Gastrocnemius medialis (tissue), 4 donors: ENCODE measurements at regions of chr2 and their contacts with region 1.

Region 1: GRCh38 chr2:127408004-127408806 is 10.0 kb upstream of the PROC start:
- DNase-seq: peak; percentile 80 to 90
- ATAC-seq: peak; percentile 63 to 70
- H3K4me3 ChIP-seq: peak overlapping the region; percentile 47 to 59 (median 54)
- H3K27ac ChIP-seq: peak overlapping the region; percentile 86 to 95 (median 89)
- H3K4me1 ChIP-seq: peaks cover 16 to 25% of the 10 kb centered on the region in 2 donors
- H3K27me3 ChIP-seq: no peaks in the 10 kb centered on the region
- CTCF ChIP-seq: peak in 1 of 5 experiments; percentile 6
- POLR2A ChIP-seq: peak; percentile 85 to 92

Region 2: GRCh38 chr2:127086990-127087790 is 321.0 kb before region 1 on chr2:
- in situ Hi-C with region 1: loop called in 1 of 4 experiments (anchors 25 kb)
- intact Hi-C with region 1: no loop called
- DNase-seq: peak in 1 of 2 donors; percentile 87
- ATAC-seq: peak; percentile 18 to 21
- H3K4me3 ChIP-seq: peak overlapping the region; percentile 24 to 42 (median 28)
- H3K27ac ChIP-seq: peak overlapping the region; percentile 97 to 100 (median 100)
- H3K4me1 ChIP-seq: peaks cover 94 to 97% of the 10 kb centered on the region in 2 donors
- H3K27me3 ChIP-seq: no peaks in the 10 kb centered on the region
- CTCF ChIP-seq: no peak
- POLR2A ChIP-seq: peak in 1 of 2 donors; percentile 61

Region 3: GRCh38 chr2:127153691-127154158 is 254.5 kb before region 1 on chr2:
- in situ Hi-C with region 1: no loop called
- intact Hi-C with region 1: loop called (anchors 5 kb)
- DNase-seq: peak; percentile 79 to 90
- ATAC-seq: peak; percentile 82 to 84
- H3K4me3 ChIP-seq: no peak overlapping the region
- H3K27ac ChIP-seq: peak overlapping the region; percentile 89 to 99 (median 93)
- H3K4me1 ChIP-seq: peaks cover 27 to 52% of the 10 kb centered on the region in 2 donors
- H3K27me3 ChIP-seq: no peaks in the 10 kb centered on the region
- CTCF ChIP-seq: no peak
- POLR2A ChIP-seq: peak; percentile 30 to 32

Region 4: DNA sequence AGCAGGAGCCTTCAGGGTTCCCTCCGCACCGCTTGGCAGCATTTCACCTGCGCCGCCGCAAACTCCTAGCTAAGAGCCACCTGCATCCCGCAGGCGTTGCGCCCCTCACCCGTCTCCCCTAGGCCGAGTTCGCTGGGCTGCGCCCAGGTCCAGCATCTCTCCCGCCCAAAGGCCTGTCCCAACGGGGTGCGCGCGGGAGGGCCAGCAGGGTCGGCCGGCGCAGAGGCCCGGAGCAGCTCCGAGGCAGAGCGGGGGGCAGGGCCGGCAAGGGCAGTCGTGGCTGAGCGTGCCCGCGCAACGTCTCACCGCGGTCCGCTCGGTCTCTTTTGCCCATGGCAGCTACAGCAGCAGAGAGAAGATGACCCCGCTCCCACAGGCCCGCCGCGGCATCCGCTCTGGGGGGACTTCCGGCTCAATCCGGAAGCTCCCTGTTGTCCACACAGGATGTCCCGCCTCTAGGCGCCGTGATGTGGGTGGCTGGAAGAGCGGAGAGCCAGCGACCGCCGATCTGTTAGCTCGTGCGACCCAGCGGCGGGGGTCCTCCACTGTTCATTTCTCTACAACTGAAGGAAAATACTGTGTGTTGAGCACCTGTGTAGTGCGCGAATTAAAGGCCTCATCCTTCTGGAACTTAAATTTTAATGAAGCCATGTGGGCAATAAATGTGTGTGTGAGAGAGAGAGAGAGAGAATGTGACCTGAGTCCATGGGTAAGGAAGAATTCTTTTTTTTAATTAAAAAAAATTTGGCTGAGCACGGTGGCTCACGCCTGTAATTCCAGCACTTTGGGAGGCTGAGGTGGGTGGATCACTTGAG is 114.2 kb before region 1 on chr2 and contains the start of gene ERCC3:
- in situ Hi-C with region 1: no loop called
- intact Hi-C with region 1: no loop called
- DNase-seq: peak; percentile 61 to 74
- ATAC-seq: peak; percentile 95
- H3K4me3 ChIP-seq: peak within 1 kb of the TSS; percentile 77 to 99 (median 86)
- H3K27ac ChIP-seq: peak within 1 kb of the TSS; percentile 78 to 85 (median 84)
- H3K4me1 ChIP-seq: peaks cover 12 to 13% of the 10 kb centered on the region in 2 donors
- H3K27me3 ChIP-seq: no peaks in the 10 kb centered on the region
- CTCF ChIP-seq: peak in 1 of 5 experiments; percentile 17
- POLR2A ChIP-seq: peak; percentile 30 to 40
- total RNA-seq, gene ERCC3: 24.9 to 28.2 (median 26.7) TPM

Region 5: DNA sequence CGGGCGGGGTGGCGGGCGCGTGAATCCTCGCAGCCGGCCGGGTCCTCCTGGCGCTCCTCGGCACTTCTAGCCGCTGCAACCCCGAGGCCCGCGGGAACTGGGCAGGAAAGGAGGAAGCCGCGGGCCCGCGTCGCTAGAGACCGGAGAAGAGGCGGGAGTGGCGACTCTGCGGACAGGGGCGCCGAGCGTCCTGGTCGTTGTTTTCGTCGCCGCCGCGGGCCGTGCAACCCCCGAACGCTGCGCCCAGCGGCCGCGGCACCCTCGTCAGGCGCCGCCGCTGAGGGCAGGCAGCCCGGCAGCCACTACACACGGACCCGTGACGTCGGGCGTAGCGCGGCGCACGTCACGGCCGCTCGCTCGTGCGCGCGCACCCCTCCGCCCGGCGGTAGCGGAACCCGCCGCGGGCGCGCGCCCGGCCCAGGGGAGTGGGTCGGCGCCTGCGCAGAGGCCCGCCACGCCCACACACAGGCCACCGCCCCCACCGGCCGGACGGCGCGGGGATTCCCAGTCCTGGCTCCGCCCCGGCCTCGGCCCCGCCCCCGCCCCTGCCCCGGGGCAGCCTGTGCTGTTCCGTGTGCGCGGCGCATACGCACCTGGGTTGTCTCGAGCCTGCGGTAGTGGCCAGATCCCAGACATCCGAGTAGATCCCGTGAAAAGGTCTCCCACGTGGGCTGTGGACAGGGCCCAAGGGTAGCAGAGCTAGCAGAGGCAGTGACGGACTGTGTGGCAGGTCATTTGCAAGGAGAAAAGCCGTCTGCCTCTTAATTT is 20.4 kb before region 1 on chr2 and contains the start of gene MAP3K2:
- in situ Hi-C with region 1: no loop called
- intact Hi-C with region 1: loop called (anchors 1 kb)
- DNase-seq: peak; percentile 94 to 98
- ATAC-seq: peak; percentile 82 to 84
- H3K4me3 ChIP-seq: peak within 1 kb of the TSS; percentile 77 to 97 (median 94)
- H3K27ac ChIP-seq: peak within 1 kb of the TSS; percentile 99 to 100 (median 100)
- H3K4me1 ChIP-seq: peaks cover 35 to 40% of the 10 kb centered on the region in 2 donors
- H3K27me3 ChIP-seq: no peaks in the 10 kb centered on the region
- CTCF ChIP-seq: peak in 1 of 5 experiments; percentile 11
- POLR2A ChIP-seq: peak; percentile 97 to 99
- total RNA-seq, gene MAP3K2: 33.8 to 46.4 (median 39.4) TPM

Region 6: DNA sequence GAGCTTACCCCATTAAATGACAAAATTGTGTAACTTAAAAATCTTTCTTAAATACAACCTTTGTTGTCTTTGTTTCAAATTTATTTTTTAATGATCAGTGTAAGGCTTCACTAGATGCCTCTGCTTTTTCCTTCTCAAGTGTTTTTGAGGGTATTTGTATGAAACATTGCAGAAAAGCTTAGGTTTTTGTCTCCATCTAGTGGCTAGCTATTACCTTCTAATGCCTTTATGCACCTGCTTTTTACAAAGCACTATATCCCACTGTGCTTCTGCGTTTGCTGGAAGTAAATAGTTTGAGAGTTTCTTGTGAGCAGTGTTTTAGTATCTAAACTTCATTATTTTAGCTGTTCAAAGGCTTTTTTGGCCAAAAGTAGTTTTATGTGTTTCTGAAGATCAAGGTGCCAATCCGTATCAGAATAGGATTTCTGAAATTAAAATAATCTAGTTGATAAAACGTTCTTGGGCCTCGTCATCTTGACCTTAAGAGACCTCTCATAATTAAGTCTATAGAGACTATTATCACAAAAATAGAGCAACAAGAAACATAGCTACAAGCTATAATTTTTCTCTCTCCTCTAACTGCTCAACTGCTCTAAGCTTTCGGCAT is 71.1 kb after region 1 on chr2:
- in situ Hi-C with region 1: no loop called
- intact Hi-C with region 1: no loop called
- DNase-seq: no peak
- ATAC-seq: peak in 1 of 2 donors; percentile 62
- H3K4me3 ChIP-seq: no peak overlapping the region
- H3K27ac ChIP-seq: no peak overlapping the region
- H3K4me1 ChIP-seq: no peaks in the 10 kb centered on the region
- H3K27me3 ChIP-seq: no peaks in the 10 kb centered on the region
- CTCF ChIP-seq: peak in 4 of 5 experiments; percentile 48 to 68 (median 60)
- POLR2A ChIP-seq: no peak